ENCODE measurements at regions of chr18 and their contacts with region 1.

Region 1: DNA sequence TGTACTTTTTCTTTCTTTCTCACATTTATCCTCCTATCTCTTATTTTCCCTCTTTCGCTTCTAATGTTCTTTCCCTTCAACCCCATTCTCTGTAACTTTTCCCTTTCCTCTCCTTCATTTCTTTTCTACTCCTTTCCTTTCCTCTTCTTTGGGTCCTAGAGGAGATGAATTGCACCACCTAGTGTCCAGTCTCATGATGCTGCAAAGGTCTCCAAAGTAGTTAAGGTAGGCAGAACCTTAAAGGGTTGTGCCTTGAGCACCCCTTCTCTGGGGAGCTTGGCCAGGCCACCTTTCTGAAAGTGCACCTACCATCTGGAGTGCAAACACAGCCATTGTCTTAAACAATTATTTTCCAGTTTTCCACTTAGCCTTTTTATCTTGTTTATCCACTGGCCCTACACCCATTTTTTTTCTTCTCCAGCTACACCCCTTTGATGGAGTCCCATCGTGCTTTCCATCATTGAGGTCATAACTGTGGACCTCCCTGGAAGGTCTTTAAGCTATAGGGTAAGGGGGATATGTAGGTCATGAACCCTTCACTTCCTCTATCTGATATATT is 156.0 kb downstream of the ESCO1 start:
- DNase-seq: peak; percentile 62
- CTCF ChIP-seq: peak; percentile 57

Region 2: GRCh38 chr18:21203096-21203495 is 241.4 kb before region 1 on chr18:
- in situ Hi-C with region 1: loop called (anchors 10 kb)
- DNase-seq: no peak
- CTCF ChIP-seq: no peak

Region 3: GRCh38 chr18:21215485-21215884 is 229.1 kb before region 1 on chr18:
- in situ Hi-C with region 1: no loop called
- DNase-seq: no peak
- CTCF ChIP-seq: no peak

Region 4: GRCh38 chr18:21330122-21330701 is 114.3 kb before region 1 on chr18:
- in situ Hi-C with region 1: loop called (anchors 25 kb)
- DNase-seq: no peak
- CTCF ChIP-seq: no peak